CD8-positive, alpha-beta memory T cell (primary cell): ENCODE measurements at regions of chr17 and their contacts with region 1.

Region 1: GRCh38 chr17:75319904-75320691 is 30.9 kb upstream of the SLC25A19 start:
- DNase-seq: no peak
- H3K4me3 ChIP-seq: no peak overlapping the region
- H3K4me3 Mint-ChIP-seq: no peak overlapping the region
- H3K27ac ChIP-seq: no peak overlapping the region
- H3K27ac Mint-ChIP-seq: no peak overlapping the region
- H3K4me1 ChIP-seq: peaks cover 6% of the 10 kb centered on the region
- H3K4me1 Mint-ChIP-seq: peaks cover 7 to 12% (median 9%) of the 10 kb centered on the region in 3 donors
- H3K27me3 ChIP-seq: no peaks in the 10 kb centered on the region
- H3K27me3 Mint-ChIP-seq: no peaks in the 10 kb centered on the region

Region 2: DNA sequence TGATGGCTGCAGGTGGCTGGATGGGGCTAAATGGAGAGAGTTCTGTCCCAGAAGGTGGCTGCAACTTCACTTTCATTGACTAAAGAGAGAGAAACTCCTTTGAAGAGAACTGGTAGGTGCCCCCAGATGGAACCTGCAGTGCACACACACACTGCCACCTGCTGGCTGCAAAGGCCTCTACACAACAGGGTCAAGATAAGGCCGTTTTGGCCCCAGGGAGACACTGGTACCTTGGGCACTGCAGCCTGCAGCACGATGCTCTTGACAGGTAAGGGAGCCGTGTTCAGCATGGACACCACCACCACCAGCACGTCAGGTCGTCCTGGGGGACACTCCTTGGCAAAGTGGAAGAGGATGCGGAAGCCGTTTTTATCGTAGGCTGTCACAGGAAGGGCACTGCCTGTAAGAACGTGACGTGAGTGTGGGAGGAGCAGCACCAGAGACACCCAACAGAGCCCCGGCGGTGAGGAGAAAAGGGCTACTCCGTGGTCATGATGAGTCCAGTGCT is 81.4 kb before region 1 on chr17:
- CTCF ChIA-PET with region 1: no interaction called
- POLR2A ChIA-PET with region 1: no interaction called
- DNase-seq: peak; percentile 38 to 68 (median 49)
- H3K4me3 ChIP-seq: no peak overlapping the region
- H3K4me3 Mint-ChIP-seq: peak overlapping the region in 6 of 7 donors; percentile 21 to 39 (median 36)
- H3K27ac ChIP-seq: no peak overlapping the region
- H3K27ac Mint-ChIP-seq: peak overlapping the region; percentile 58 to 97 (median 92)
- H3K4me1 ChIP-seq: peaks cover 29% of the 10 kb centered on the region
- H3K4me1 Mint-ChIP-seq: peaks cover 31 to 41% (median 31%) of the 10 kb centered on the region in 3 donors
- H3K27me3 ChIP-seq: no peaks in the 10 kb centered on the region
- H3K27me3 Mint-ChIP-seq: no peaks in the 10 kb centered on the region

Region 3: DNA sequence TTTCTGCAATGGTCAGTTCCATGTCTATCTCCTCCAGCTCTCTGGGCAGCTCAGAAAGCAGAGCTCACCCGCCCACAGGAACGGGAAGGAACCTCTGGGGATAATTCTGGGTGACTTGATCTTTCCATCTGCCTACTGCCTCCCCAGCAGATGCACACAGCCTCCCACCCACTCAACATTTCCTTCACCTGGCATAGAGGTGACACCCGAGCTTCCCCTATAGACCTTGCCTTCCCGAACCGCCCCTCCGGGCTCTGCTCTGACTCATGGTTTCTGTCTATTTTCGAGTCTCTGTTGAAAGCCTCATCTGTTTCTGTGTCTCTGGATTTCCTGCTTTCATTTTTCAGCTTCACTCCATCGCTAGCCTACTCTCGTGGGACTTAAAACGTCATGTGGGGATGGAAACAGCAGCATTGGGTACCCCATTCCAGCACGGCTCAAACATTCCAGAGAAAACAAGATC is 70.1 kb before region 1 on chr17:
- CTCF ChIA-PET with region 1: no interaction called
- POLR2A ChIA-PET with region 1: no interaction called
- DNase-seq: peak in 4 of 5 donors; percentile 26 to 71 (median 46)
- H3K4me3 ChIP-seq: peak overlapping the region; percentile 49
- H3K4me3 Mint-ChIP-seq: peak overlapping the region; percentile 35 to 85 (median 70)
- H3K27ac ChIP-seq: peak overlapping the region; percentile 0
- H3K27ac Mint-ChIP-seq: peak overlapping the region; percentile 79 to 98 (median 93)
- H3K4me1 ChIP-seq: peaks cover 13% of the 10 kb centered on the region
- H3K4me1 Mint-ChIP-seq: peaks cover 47 to 56% (median 53%) of the 10 kb centered on the region in 3 donors
- H3K27me3 ChIP-seq: no peaks in the 10 kb centered on the region
- H3K27me3 Mint-ChIP-seq: peaks cover 0 to 1% of the 10 kb centered on the region in 2 donors

Region 4: DNA sequence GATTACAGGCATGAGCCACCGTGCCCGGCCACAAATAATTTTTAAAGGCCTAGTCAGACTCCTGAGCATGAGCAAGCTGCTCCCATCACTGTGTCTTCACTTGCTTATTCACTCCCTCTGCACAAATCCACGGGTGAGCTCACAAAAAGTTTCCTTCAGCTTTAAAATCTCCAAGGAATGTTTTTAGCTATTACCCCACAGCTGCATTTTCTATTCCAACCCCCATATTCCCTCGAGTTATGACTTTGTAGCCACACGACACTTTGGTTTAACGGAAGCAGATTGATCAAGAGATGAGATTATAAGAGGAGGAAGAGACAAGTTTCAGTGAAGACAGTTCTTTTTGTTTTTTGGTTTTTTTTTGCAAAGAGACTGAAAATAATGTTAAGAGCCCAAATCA is 18.2 kb after region 1 on chr17:
- CTCF ChIA-PET with region 1: interaction called, 16 read pairs
- POLR2A ChIA-PET with region 1: no interaction called
- DNase-seq: peak in 1 of 5 donors; percentile 48
- H3K4me3 ChIP-seq: peak overlapping the region; percentile 5
- H3K4me3 Mint-ChIP-seq: peak overlapping the region; percentile 40 to 78 (median 62)
- H3K27ac ChIP-seq: peak overlapping the region; percentile 19
- H3K27ac Mint-ChIP-seq: peak overlapping the region; percentile 45 to 92 (median 75)
- H3K4me1 ChIP-seq: peaks cover 76% of the 10 kb centered on the region
- H3K4me1 Mint-ChIP-seq: peaks cover 65 to 84% (median 82%) of the 10 kb centered on the region in 3 donors
- H3K27me3 ChIP-seq: no peaks in the 10 kb centered on the region
- H3K27me3 Mint-ChIP-seq: no peaks in the 10 kb centered on the region

Region 5: DNA sequence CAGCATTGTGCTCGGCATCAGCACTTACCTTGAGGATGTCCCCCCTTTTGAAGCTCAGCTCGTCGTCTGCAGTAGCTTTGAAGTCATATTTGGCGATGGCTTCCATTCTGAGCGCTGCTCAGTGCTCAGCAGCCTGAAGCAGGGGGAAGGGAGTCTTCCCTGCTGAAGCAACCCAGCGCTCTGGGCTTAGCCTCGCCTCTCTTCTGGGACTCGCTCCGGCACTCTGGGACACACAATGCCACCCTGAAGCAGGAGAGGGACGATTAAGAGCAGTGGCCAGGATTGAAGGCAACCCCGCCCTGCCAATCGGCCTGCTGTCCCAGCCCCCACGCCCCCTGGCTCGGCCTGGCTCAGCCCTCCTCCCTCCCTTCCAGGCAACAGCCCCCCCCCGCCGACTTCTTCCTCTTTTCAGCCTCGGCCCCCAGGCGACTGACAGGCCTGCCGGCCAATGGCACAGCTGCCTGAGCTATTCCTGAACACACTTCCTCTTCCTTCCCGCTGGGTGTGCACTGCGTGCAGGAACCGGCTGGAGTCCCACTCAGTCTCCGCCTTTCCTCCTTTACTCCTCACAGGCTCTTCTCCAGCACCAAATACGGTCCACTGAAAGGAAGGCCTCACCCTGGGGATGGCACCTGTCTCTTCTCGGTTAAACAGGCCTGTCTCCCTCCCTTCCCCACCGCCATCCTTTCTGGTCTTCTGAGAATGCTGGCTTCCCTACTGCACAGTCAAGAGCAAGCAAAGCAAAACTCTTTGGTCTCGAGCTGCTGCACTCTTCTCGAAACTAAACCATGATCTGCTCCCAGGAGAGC is 73.6 kb after region 1 on chr17:
- CTCF ChIA-PET with region 1: interaction called, 17 read pairs
- POLR2A ChIA-PET with region 1: interaction called, 5 read pairs
- DNase-seq: peak; percentile 72 to 88 (median 78)
- H3K4me3 ChIP-seq: peak overlapping the region; percentile 86
- H3K4me3 Mint-ChIP-seq: peak overlapping the region; percentile 89 to 99 (median 95)
- H3K27ac ChIP-seq: peak overlapping the region; percentile 49
- H3K27ac Mint-ChIP-seq: peak overlapping the region; percentile 52 to 95 (median 88)
- H3K4me1 ChIP-seq: peaks cover 66% of the 10 kb centered on the region
- H3K4me1 Mint-ChIP-seq: peaks cover 73 to 96% (median 87%) of the 10 kb centered on the region in 3 donors
- H3K27me3 ChIP-seq: no peaks in the 10 kb centered on the region
- H3K27me3 Mint-ChIP-seq: no peaks in the 10 kb centered on the region

Region 6: GRCh38 chr17:75405365-75406221 is 85.5 kb after region 1 on chr17 and contains the start of gene GRB2:
- CTCF ChIA-PET with region 1: interaction called, 78 read pairs
- POLR2A ChIA-PET with region 1: interaction called, 7 read pairs
- DNase-seq: peak; percentile 99 to 100 (median 100)
- H3K4me3 ChIP-seq: peak within 1 kb of the TSS; percentile 68
- H3K4me3 Mint-ChIP-seq: peak within 1 kb of the TSS; percentile 93 to 98 (median 97)
- H3K27ac ChIP-seq: peak within 1 kb of the TSS; percentile 90
- H3K27ac Mint-ChIP-seq: peak within 1 kb of the TSS; percentile 86 to 99 (median 95)
- H3K4me1 ChIP-seq: peaks cover 40% of the 10 kb centered on the region
- H3K4me1 Mint-ChIP-seq: peaks cover 37 to 47% (median 45%) of the 10 kb centered on the region in 3 donors
- H3K27me3 ChIP-seq: no peaks in the 10 kb centered on the region
- H3K27me3 Mint-ChIP-seq: peaks cover 0 to 4% of the 10 kb centered on the region in 2 donors
- total RNA-seq, gene GRB2: 180 to 189 TPM

Region 7: GRCh38 chr17:75450270-75450669 is 130.2 kb after region 1 on chr17:
- CTCF ChIA-PET with region 1: no interaction called
- POLR2A ChIA-PET with region 1: no interaction called
- DNase-seq: no peak
- H3K4me3 ChIP-seq: no peak overlapping the region
- H3K4me3 Mint-ChIP-seq: no peak overlapping the region
- H3K27ac ChIP-seq: no peak overlapping the region
- H3K27ac Mint-ChIP-seq: no peak overlapping the region
- H3K4me1 ChIP-seq: no peaks in the 10 kb centered on the region
- H3K4me1 Mint-ChIP-seq: peaks cover 0 to 2% (median 0%) of the 10 kb centered on the region in 3 donors
- H3K27me3 ChIP-seq: no peaks in the 10 kb centered on the region
- H3K27me3 Mint-ChIP-seq: peaks cover 0 to 2% of the 10 kb centered on the region in 2 donors

Region 8: GRCh38 chr17:75487351-75488070 is 167.4 kb after region 1 on chr17:
- CTCF ChIA-PET with region 1: no interaction called
- POLR2A ChIA-PET with region 1: no interaction called
- DNase-seq: peak; percentile 33 to 68 (median 54)
- H3K4me3 ChIP-seq: peak overlapping the region; percentile 25
- H3K4me3 Mint-ChIP-seq: peak overlapping the region; percentile 60 to 90 (median 80)
- H3K27ac ChIP-seq: peak overlapping the region; percentile 12
- H3K27ac Mint-ChIP-seq: peak overlapping the region; percentile 91 to 100 (median 96)
- H3K4me1 ChIP-seq: peaks cover 24% of the 10 kb centered on the region
- H3K4me1 Mint-ChIP-seq: peaks cover 26 to 40% (median 30%) of the 10 kb centered on the region in 3 donors
- H3K27me3 ChIP-seq: no peaks in the 10 kb centered on the region
- H3K27me3 Mint-ChIP-seq: no peaks in the 10 kb centered on the region